ENCODE measurements at regions of chr16 and their contacts with region 1.

Region 1: GRCh38 chr16:68396481-68396880 is 51.8 kb downstream of the SMPD3 start:
- DNase-seq: peak; percentile 66
- ATAC-seq: peak; percentile 59
- H3K4me3 Mint-ChIP-seq: no peak overlapping the region
- H3K27ac Mint-ChIP-seq: no peak overlapping the region
- H3K4me1 Mint-ChIP-seq: peaks cover 21% of the 10 kb centered on the region
- H3K27me3 Mint-ChIP-seq: peaks cover 18% of the 10 kb centered on the region

Region 2: GRCh38 chr16:68356249-68356918 is 40.1 kb before region 1 on chr16:
- CTCF ChIA-PET with region 1: no interaction called
- POLR2A ChIA-PET with region 1: no interaction called
- DNase-seq: peak; percentile 92
- ATAC-seq: peak; percentile 87
- H3K4me3 Mint-ChIP-seq: peak overlapping the region; percentile 40
- H3K27ac Mint-ChIP-seq: peak overlapping the region; percentile 75
- H3K4me1 Mint-ChIP-seq: peaks cover 48% of the 10 kb centered on the region
- H3K27me3 Mint-ChIP-seq: peaks cover 3% of the 10 kb centered on the region

Region 3: DNA sequence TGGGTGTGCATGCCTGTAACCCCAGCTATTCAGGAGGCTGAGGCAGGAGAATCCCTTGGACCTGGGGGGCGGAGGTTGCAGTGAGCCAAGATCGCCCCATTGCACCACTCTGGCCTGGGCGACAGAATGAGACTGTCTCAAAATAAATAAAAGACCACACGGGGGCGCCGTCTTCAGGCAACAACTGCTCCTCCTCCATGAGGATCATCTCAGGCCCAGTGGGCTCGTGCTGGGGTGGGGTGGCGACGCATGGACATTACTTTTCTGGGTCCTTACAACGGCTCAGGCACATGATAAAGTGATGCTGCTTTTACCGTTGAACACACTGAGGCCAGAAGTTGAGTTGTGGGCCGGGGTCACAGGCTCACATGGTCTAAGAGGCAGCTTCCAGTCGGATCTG is 29.5 kb before region 1 on chr16:
- CTCF ChIA-PET with region 1: interaction called, 14 read pairs
- POLR2A ChIA-PET with region 1: no interaction called
- DNase-seq: peak; percentile 74
- ATAC-seq: peak; percentile 24
- H3K4me3 Mint-ChIP-seq: no peak overlapping the region
- H3K27ac Mint-ChIP-seq: no peak overlapping the region
- H3K4me1 Mint-ChIP-seq: peaks cover 53% of the 10 kb centered on the region
- H3K27me3 Mint-ChIP-seq: peaks cover 21% of the 10 kb centered on the region

Region 4: GRCh38 chr16:68406451-68407152 is 10.1 kb after region 1 on chr16:
- CTCF ChIA-PET with region 1: interaction called, 33 read pairs
- POLR2A ChIA-PET with region 1: no interaction called
- DNase-seq: no peak
- ATAC-seq: no peak
- H3K4me3 Mint-ChIP-seq: no peak overlapping the region
- H3K27ac Mint-ChIP-seq: no peak overlapping the region
- H3K4me1 Mint-ChIP-seq: peaks cover 20% of the 10 kb centered on the region
- H3K27me3 Mint-ChIP-seq: peaks cover 20% of the 10 kb centered on the region

Region 5: DNA sequence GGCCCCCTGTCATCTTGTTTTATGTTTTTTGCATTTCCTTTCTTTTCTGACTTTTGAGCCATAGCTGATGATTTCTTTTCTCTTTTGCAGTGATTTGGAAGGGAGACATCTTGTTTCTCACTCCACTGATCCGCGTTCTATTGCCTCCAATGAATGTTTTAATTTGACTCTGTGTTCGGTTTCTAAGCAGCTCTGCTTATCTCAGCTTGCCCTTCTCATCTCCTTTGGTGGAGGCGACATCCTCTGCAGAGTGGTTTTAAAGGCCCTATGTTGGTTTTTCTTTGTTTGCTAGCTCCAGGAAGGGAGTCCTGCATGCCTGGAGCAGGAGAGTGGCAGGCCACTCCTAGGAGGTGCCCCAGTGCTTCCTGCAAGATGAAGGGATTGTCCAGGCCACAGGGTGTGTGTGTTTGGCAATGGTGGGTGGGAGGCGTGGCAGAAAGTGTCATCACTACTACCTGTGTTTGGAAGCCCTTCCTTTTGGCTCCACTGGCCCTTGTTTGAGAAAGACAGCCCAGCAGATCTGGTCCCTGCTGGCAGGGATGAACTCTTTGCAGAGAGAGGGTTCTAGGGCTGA is 38.2 kb after region 1 on chr16:
- CTCF ChIA-PET with region 1: interaction called, 12 read pairs
- POLR2A ChIA-PET with region 1: no interaction called
- DNase-seq: peak; percentile 26
- ATAC-seq: peak; percentile 15
- H3K4me3 Mint-ChIP-seq: no peak overlapping the region
- H3K27ac Mint-ChIP-seq: peak overlapping the region; percentile 8
- H3K4me1 Mint-ChIP-seq: peaks cover 17% of the 10 kb centered on the region
- H3K27me3 Mint-ChIP-seq: peaks cover 33% of the 10 kb centered on the region

Region 6: DNA sequence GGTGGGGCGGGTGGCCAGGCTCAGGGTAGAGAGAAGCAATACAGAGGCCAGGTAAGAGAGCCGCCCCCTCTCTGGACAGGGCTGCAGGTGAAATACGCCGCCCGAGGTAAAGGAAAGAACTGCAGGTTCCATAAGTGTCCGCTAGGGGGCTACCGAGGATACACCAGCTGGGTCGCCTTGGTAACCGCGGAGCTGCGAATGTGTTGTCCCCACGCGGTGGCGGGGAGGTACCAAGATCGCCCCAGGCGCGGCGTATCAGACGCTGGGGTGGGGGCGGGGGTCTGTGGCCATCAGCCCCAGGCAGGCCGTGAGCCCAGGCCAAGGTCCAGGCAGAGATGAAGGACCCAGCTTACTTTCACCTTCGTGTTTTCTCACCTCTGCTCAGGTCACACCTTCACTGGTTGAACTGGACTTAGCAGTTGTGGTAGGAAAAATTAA is 124.2 kb after region 1 on chr16:
- CTCF ChIA-PET with region 1: interaction called, 13 read pairs
- POLR2A ChIA-PET with region 1: no interaction called
- DNase-seq: peak; percentile 93
- ATAC-seq: peak; percentile 95
- H3K4me3 Mint-ChIP-seq: peak overlapping the region; percentile 18
- H3K27ac Mint-ChIP-seq: peak overlapping the region; percentile 34
- H3K4me1 Mint-ChIP-seq: peaks cover 8% of the 10 kb centered on the region
- H3K27me3 Mint-ChIP-seq: no peaks in the 10 kb centered on the region